CD4-positive, alpha-beta memory T cell (primary cell): ENCODE measurements at regions of chr10 and their contacts with region 1.

Region 1: DNA sequence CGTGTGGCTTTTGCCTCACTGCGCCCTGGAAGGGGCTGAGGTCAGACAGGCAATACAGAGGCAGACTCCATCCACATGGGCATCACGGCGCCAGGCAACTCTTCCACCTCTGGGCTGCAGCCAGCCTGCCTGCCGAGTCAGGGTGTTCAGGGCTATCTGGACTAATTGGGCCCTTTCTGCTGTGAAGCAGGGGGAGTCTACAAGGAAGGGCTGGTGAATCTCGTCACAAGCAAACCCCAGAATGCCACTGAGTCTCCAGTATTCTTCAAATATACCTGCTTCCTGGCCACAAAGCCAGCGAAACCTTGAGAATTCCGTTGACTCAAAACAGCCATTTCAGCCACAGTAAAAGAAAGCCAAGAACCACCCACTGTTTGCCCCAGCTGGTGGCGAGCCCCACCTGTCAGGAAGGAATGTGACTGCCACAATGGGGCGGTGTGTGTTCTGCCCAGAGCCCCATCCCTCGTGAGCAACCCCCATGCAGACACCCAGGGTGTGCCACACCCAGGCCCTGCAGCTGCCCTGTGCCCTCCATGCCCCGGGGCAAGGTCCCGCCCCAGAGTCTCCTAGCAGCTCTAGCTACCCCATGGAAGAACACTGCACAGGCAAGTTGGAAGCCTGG is 117.3 kb downstream of the FAM53B start:
- DNase-seq: peak; percentile 46 to 60 (median 55)
- H3K4me3 ChIP-seq: peak overlapping the region; percentile 11 to 14
- H3K4me3 Mint-ChIP-seq: peak overlapping the region in 7 of 8 donors; percentile 36 to 76 (median 69)
- H3K27ac ChIP-seq: peak overlapping the region; percentile 49
- H3K27ac Mint-ChIP-seq: peak overlapping the region; percentile 82 to 96 (median 89)
- H3K4me1 ChIP-seq: peaks cover 68% of the 10 kb centered on the region
- H3K4me1 Mint-ChIP-seq: peaks cover 34 to 81% (median 50%) of the 10 kb centered on the region in 4 donors
- H3K27me3 ChIP-seq: no peaks in the 10 kb centered on the region
- H3K27me3 Mint-ChIP-seq: no peaks in the 10 kb centered on the region

Region 2: DNA sequence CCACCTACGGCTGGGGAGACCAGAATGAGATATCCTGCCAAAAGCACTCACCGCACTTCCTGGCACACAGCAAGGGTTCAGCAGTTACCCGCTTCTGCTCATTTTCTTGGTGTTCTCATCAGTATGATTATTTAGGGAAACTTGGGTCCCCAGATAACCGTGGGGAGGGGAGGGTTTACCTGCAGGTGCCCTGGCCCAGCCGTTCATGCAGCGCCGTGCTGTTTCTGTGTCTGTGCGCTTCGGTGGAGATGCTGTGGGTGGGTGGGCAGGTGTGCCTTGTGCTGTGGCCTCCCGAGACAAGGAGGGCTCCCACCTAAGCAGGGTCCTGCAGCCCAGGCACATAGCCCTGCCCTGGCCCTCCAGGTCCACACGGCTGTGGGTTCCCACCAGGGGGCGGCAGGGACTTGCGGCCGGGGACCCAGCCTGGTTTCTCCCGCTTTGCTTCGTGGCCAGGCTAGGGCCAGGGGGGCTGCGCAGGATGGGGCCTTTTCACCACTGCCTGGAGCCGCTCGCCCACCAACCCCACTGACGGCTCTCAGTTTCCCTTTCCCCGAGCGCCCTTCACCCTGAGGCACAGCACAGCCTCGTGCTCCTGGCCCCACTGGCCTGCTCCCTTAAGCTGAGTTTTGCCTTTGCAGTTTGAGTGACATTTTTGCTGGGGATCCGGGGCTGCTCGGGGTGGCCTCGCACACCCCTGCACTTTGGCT is 86.8 kb before region 1 on chr10:
- CTCF ChIA-PET with region 1: interaction called, 3 read pairs
- POLR2A ChIA-PET with region 1: no interaction called
- intact Hi-C with region 1: loop called (anchors 1 kb)
- DNase-seq: peak; percentile 59 to 69 (median 63)
- H3K4me3 ChIP-seq: no peak overlapping the region
- H3K4me3 Mint-ChIP-seq: peak overlapping the region in 1 of 8 donors; percentile 36
- H3K27ac ChIP-seq: no peak overlapping the region
- H3K27ac Mint-ChIP-seq: peak overlapping the region in 1 of 7 donors; percentile 65
- H3K4me1 ChIP-seq: peaks cover 8% of the 10 kb centered on the region
- H3K4me1 Mint-ChIP-seq: peaks cover 0 to 10% (median 2%) of the 10 kb centered on the region in 4 donors
- H3K27me3 ChIP-seq: no peaks in the 10 kb centered on the region
- H3K27me3 Mint-ChIP-seq: no peaks in the 10 kb centered on the region

Region 3: GRCh38 chr10:124565565-124566256 is 61.2 kb before region 1 on chr10:
- CTCF ChIA-PET with region 1: no interaction called
- POLR2A ChIA-PET with region 1: no interaction called
- intact Hi-C with region 1: no loop called
- DNase-seq: no peak
- H3K4me3 ChIP-seq: no peak overlapping the region
- H3K4me3 Mint-ChIP-seq: no peak overlapping the region
- H3K27ac ChIP-seq: no peak overlapping the region
- H3K27ac Mint-ChIP-seq: no peak overlapping the region
- H3K4me1 ChIP-seq: no peaks in the 10 kb centered on the region
- H3K4me1 Mint-ChIP-seq: no peaks in the 10 kb centered on the region
- H3K27me3 ChIP-seq: no peaks in the 10 kb centered on the region
- H3K27me3 Mint-ChIP-seq: no peaks in the 10 kb centered on the region

Region 4: DNA sequence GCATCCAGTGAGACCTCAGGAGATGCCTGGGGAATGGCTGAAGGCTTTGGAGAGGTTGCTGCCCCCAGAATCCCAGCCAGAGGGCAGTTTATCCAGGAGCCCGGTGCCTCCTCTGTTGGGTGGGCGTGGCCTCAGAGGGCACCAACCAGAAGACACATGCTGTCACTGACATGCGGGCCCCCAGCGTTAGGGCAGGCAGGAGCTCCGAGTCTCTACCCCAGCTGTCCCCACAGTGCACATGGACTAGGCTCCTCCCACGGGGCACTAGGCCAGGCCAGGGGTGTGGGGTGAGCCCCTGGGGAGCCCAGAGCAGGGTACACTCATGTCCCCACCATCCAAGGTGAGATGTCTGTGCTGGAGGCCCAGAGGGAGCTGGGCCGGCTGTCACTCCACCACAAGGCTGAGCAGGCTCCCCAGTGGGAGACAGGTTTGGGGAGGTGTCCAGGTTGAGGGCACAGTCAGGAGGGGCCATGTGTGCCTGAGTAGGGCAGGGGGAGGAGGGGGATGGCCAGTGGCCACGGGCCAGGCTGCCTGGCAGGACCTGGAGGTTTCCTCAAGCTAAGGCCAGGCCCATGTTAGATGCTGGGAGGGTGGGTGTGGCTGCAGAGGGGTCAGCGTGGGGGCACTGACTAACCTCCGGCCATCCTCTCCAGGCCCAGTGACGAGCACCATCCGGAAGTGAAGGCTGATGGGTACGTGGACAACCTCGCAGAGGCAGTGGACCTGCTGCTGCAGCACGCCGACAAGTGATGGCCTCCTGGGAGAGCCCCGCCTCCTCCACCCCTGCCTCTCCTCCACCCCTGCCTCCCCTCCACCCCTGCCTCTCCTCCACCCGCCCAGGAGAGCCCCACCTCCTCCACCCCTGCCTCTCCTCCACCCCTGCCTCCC is 14.0 kb before region 1 on chr10:
- CTCF ChIA-PET with region 1: interaction called, 3 read pairs
- POLR2A ChIA-PET with region 1: interaction called, 14 read pairs
- intact Hi-C with region 1: no loop called
- DNase-seq: peak in 4 of 5 donors; percentile 21 to 57 (median 28)
- H3K4me3 ChIP-seq: no peak overlapping the region
- H3K4me3 Mint-ChIP-seq: peak overlapping the region in 5 of 8 donors; percentile 59 to 80 (median 75)
- H3K27ac ChIP-seq: peak overlapping the region; percentile 37
- H3K27ac Mint-ChIP-seq: peak overlapping the region; percentile 77 to 92 (median 88)
- H3K4me1 ChIP-seq: peaks cover 36% of the 10 kb centered on the region
- H3K4me1 Mint-ChIP-seq: peaks cover 19 to 55% (median 34%) of the 10 kb centered on the region in 4 donors
- H3K27me3 ChIP-seq: no peaks in the 10 kb centered on the region
- H3K27me3 Mint-ChIP-seq: no peaks in the 10 kb centered on the region

Region 5: GRCh38 chr10:124641282-124642087 is 14.6 kb after region 1 on chr10:
- CTCF ChIA-PET with region 1: interaction called, 33 read pairs
- POLR2A ChIA-PET with region 1: interaction called, 10 read pairs
- intact Hi-C with region 1: loop called (anchors 1 kb)
- DNase-seq: peak in 4 of 5 donors; percentile 42 to 76 (median 52)
- H3K4me3 ChIP-seq: peak overlapping the region in 1 of 2 donors; percentile 17
- H3K4me3 Mint-ChIP-seq: peak overlapping the region; percentile 4 to 87 (median 81)
- H3K27ac ChIP-seq: peak overlapping the region; percentile 36
- H3K27ac Mint-ChIP-seq: peak overlapping the region; percentile 89 to 97 (median 95)
- H3K4me1 ChIP-seq: peaks cover 95% of the 10 kb centered on the region
- H3K4me1 Mint-ChIP-seq: peaks cover 58 to 100% (median 87%) of the 10 kb centered on the region in 4 donors
- H3K27me3 ChIP-seq: no peaks in the 10 kb centered on the region
- H3K27me3 Mint-ChIP-seq: no peaks in the 10 kb centered on the region

Region 6: DNA sequence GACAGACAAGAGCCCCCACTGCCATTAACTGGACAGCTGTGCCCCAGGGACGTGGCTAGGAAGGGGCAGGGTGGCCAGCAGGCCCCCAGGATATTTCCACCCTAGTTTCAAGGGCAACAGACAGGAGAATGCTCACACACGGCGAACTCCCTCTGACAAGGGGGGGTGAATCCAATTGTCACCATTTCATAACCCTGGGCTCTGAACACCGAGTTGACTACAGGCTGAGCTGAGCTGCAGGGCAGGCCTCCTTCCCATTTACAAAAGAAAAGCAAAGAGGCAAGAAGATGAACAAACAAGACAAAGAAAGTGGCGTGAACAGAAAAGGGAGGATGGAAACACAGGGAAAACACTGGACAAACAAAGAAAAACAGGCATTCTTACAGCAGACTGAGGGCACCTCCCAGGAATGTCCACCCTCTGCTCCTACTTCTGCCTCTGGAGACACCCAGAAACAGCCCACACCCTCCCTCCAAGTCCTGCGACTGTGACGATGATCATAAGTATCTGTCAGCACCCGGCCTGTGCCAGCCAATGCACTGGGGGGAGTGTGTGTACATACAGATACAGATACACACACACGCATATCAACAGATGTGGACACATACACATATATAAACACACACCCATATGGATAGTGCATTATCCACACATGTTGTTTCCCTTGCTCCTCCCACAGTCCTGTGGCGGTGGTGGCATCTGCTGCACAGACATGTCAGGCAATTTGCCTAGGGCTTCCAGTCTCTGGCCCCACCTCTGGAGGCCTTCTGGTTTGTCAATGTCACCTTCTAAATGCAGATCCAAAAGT is 51.1 kb after region 1 on chr10:
- CTCF ChIA-PET with region 1: interaction called, 6 read pairs
- POLR2A ChIA-PET with region 1: interaction called, 11 read pairs
- intact Hi-C with region 1: loop called (anchors 2 kb)
- DNase-seq: no peak
- H3K4me3 ChIP-seq: peak overlapping the region; percentile 36 to 56
- H3K4me3 Mint-ChIP-seq: peak overlapping the region; percentile 76 to 88 (median 79)
- H3K27ac ChIP-seq: peak overlapping the region; percentile 54
- H3K27ac Mint-ChIP-seq: peak overlapping the region; percentile 85 to 97 (median 92)
- H3K4me1 ChIP-seq: peaks cover 96% of the 10 kb centered on the region
- H3K4me1 Mint-ChIP-seq: peaks cover 70 to 99% (median 89%) of the 10 kb centered on the region in 4 donors
- H3K27me3 ChIP-seq: no peaks in the 10 kb centered on the region
- H3K27me3 Mint-ChIP-seq: no peaks in the 10 kb centered on the region

Region 7: DNA sequence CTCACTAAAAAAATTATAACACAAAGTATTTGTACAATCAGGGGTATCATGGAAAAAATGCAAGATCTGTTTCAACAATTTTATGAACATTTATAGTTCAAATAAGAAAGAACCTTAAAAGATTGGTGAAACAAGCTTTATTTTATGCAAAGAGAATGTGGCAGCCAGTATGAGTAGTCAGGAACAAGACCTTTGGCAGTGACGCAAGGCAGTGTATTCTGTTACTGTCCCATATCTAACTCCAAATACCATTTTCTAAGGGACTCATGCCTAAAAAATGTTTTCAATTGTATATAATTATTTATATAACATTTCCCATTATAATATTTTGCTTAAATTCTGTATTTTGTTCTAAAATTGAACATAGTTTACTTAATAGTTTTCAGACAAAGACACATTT is 136.4 kb after region 1 on chr10:
- CTCF ChIA-PET with region 1: no interaction called
- POLR2A ChIA-PET with region 1: no interaction called
- intact Hi-C with region 1: no loop called
- DNase-seq: no peak
- H3K4me3 ChIP-seq: no peak overlapping the region
- H3K4me3 Mint-ChIP-seq: no peak overlapping the region
- H3K27ac ChIP-seq: no peak overlapping the region
- H3K27ac Mint-ChIP-seq: no peak overlapping the region
- H3K4me1 ChIP-seq: no peaks in the 10 kb centered on the region
- H3K4me1 Mint-ChIP-seq: peaks cover 0 to 3% (median 0%) of the 10 kb centered on the region in 4 donors
- H3K27me3 ChIP-seq: no peaks in the 10 kb centered on the region
- H3K27me3 Mint-ChIP-seq: no peaks in the 10 kb centered on the region